ENCODE measurements at regions of chr11 and their contacts with region 1.

Region 1: DNA sequence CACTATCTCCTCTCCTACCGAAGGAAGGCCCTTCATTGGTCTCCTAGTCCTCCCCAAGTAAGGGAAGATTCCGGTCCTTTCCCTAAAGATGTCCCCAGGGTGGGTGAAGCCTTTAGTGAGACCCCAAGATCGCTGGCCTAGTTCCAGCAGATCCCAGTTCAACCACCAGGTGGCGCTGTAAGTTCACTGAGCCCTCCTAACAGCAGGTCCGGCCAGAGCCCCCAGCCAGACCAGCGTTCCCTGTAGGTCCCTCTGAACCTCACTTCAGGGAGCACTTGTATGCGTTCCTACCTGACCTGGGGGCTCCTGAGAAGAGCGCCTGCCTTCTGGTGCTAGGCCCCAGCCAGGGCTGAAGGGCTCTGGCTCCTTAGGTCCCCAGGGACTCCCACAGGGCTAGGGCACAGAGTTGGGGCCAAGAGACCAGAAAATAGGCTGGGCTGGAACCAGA is 38.1 kb downstream of the LMO1 start:
- DNase-seq: peak; percentile 80
- ATAC-seq: peak; percentile 66
- H3K4me3 ChIP-seq: no peak overlapping the region
- H3K4me3 Mint-ChIP-seq: no peak overlapping the region
- H3K27ac ChIP-seq: no peak overlapping the region
- H3K27ac Mint-ChIP-seq: no peak overlapping the region
- H3K4me1 ChIP-seq: peaks cover 0 to 6% of the 10 kb centered on the region in 2 donors
- H3K4me1 Mint-ChIP-seq: peaks cover 2% of the 10 kb centered on the region
- H3K27me3 ChIP-seq: no peaks in the 10 kb centered on the region
- H3K27me3 Mint-ChIP-seq: no peaks in the 10 kb centered on the region
- CTCF ChIP-seq: peak; percentile 93

Region 2: GRCh38 chr11:6468712-6469495 is 1756.7 kb before region 1 on chr11:
- CTCF ChIA-PET with region 1: no interaction called
- POLR2A ChIA-PET with region 1: no interaction called
- intact Hi-C with region 1: no loop called
- DNase-seq: no peak
- ATAC-seq: no peak
- H3K4me3 ChIP-seq: no peak overlapping the region
- H3K4me3 Mint-ChIP-seq: no peak overlapping the region
- H3K27ac ChIP-seq: no peak overlapping the region
- H3K27ac Mint-ChIP-seq: no peak overlapping the region
- H3K4me1 ChIP-seq: peaks cover 8 to 12% of the 10 kb centered on the region in 2 donors
- H3K4me1 Mint-ChIP-seq: peaks cover 14% of the 10 kb centered on the region
- H3K27me3 ChIP-seq: peaks cover 0 to 5% (median 0%) of the 10 kb centered on the region in 4 experiments
- H3K27me3 Mint-ChIP-seq: no peaks in the 10 kb centered on the region
- CTCF ChIP-seq: no peak

Region 3: GRCh38 chr11:8192016-8192895 is 33.4 kb before region 1 on chr11:
- CTCF ChIA-PET with region 1: interaction called, 11 read pairs
- POLR2A ChIA-PET with region 1: no interaction called
- intact Hi-C with region 1: no loop called
- DNase-seq: peak; percentile 78
- ATAC-seq: peak; percentile 81
- H3K4me3 ChIP-seq: no peak overlapping the region
- H3K4me3 Mint-ChIP-seq: no peak overlapping the region
- H3K27ac ChIP-seq: no peak overlapping the region
- H3K27ac Mint-ChIP-seq: no peak overlapping the region
- H3K4me1 ChIP-seq: peaks cover 12 to 15% of the 10 kb centered on the region in 2 donors
- H3K4me1 Mint-ChIP-seq: peaks cover 13% of the 10 kb centered on the region
- H3K27me3 ChIP-seq: peaks cover 0 to 2% (median 0%) of the 10 kb centered on the region in 4 experiments
- H3K27me3 Mint-ChIP-seq: peaks cover 20% of the 10 kb centered on the region
- CTCF ChIP-seq: peak; percentile 94

Region 4: DNA sequence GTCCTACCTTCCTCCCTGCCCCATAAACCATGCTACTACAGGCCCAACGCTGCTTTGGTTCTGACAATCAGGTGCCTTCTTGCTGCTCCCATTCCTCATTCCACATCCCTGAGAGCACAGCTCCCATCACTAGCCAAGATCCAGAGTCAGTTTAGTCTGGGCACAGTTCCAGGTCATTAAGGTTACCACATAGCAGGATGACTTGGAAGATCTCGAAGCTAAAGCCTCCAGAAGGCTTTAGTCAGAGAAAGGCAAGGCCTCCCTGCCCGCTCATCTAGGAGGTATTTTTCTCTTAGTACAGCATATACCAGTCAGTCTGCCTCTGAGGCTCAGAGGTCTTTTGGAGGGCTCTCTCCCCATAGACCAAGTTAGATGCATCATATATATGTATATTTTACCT is 426.5 kb after region 1 on chr11:
- CTCF ChIA-PET with region 1: no interaction called
- POLR2A ChIA-PET with region 1: no interaction called
- intact Hi-C with region 1: no loop called
- DNase-seq: no peak
- ATAC-seq: no peak
- H3K4me3 ChIP-seq: no peak overlapping the region
- H3K4me3 Mint-ChIP-seq: no peak overlapping the region
- H3K27ac ChIP-seq: no peak overlapping the region
- H3K27ac Mint-ChIP-seq: no peak overlapping the region
- H3K4me1 ChIP-seq: no peaks in the 10 kb centered on the region
- H3K4me1 Mint-ChIP-seq: no peaks in the 10 kb centered on the region
- H3K27me3 ChIP-seq: no peaks in the 10 kb centered on the region
- H3K27me3 Mint-ChIP-seq: no peaks in the 10 kb centered on the region
- CTCF ChIP-seq: no peak

Measured in B cell (primary cell).